Activated T-helper 2 cell treated with anti-CD3 and anti-CD28 coated beads, Interferon-gamma antibody, Interleukin-2, Interleukin-4, amounts not matched to agents 10 μg/mL and 5 μg/mL and 100 μg/mL, durations not matched to agents 14 hours and 24 hours and 36 hours (primary cell): ENCODE measurements at regions of chr18 and their contacts with region 1.

Region 1: DNA sequence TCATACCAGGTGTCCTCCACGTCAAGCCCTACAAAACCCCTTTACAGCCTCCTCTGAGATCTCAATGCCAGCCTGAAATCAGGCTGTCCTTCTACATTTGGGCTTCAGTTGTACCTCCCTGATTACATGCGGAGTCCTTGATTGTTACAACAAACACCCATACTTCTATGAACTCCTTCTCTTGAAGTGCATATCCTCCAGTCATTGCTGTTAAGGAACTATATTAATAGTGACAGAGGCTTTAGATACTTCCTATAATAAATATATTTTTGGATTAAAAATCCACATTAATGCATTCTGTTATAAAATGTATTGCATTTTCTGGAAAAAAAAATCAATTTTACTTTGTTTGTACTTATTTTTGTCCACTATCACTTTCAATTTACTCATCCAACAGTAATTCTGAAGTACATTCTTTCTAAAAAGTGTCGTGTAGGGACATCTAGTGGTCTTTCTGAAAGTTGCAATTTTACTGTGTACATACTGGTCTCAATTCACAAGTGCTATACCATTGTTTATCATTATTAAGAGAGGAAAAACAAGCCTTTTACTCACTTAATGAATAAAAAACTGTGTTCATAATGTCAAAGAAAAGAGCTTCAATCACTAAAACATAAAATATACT is 316.4 kb downstream of the DSEL start:
- DNase-seq: no peak
- H3K4me3 Mint-ChIP-seq: no peak overlapping the region
- H3K27ac Mint-ChIP-seq: no peak overlapping the region
- H3K4me1 Mint-ChIP-seq: no peaks in the 10 kb centered on the region
- H3K27me3 Mint-ChIP-seq: peaks cover 4% of the 10 kb centered on the region

Region 2: DNA sequence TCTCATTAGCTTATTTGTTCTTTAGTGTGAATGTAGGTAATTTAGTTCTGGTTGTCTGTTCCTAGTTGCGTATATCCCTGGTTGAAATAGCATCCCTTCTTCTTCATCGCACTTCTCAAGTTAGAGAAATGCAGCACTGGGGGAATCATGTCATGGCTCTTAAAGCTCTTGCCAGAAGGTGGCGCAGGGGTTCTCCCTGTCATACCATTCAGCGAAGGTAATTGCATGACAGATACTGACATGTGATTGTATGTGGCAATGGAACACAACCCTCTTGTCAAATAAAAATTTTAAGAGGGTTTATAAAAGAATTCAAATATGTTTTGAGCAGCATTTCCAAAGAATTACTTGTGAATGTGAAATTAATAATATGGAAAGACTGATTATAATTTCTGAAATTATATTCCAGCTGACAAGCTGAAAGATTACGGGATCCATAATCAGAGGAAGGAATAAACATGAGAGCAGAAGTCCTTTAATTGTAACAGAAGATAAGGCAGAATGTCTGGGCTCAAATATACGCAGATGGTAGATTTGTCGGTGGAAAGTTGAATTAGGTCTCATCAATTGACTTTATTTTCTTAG is 95.3 kb before region 1 on chr18:
- intact Hi-C with region 1: loop called (anchors 1 kb)
- DNase-seq: no peak
- H3K4me3 Mint-ChIP-seq: no peak overlapping the region
- H3K27ac Mint-ChIP-seq: no peak overlapping the region
- H3K4me1 Mint-ChIP-seq: no peaks in the 10 kb centered on the region
- H3K27me3 Mint-ChIP-seq: no peaks in the 10 kb centered on the region